ENCODE measurements at regions of chr2 and their contacts with region 1.

Region 1: DNA sequence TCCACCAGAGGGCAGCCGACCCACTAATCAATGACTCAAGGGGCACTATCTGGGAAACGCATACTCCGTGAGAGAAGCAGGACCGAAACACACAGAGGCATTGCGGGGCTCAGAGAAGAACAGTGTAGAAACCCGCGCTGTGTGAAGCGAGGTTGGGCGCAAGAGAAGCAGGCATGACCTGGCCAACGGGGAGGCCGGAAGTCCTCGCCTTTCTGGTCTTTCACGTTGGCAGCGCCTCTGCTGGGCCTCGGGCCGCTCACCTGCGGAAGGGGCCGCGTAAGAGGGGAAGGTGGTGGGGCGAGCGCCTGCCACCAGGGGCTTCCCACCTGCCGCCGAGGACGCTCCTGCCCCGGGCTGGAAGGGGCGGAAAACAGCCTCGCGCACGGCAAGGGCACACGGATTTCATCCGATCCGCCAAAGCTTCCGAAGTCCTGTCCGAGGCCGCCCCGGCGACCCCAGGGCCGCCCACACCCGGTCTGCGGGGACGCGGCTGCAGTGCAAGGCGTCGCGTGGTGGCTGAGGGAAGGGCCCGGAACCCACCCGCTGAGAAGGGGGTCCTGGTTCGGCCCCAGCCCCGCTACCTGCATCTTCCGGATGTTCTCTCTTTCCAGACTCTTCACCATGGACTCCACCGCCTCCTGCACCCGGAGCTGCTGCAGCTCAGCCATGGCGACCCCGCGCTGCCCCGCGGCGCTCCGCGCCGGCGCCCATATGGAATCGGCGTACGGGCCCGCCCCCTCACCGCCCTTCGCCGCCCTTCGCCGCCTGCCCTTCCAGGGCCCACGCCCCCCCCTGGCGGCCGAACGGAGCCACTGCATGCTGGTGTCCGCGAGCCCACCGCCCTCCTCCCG is at the start of gene FAM136A:
- DNase-seq: peak; percentile 93
- H3K4me3 Mint-ChIP-seq: peak within 1 kb of the TSS; percentile 86
- H3K27ac Mint-ChIP-seq: peak within 1 kb of the TSS; percentile 92
- H3K4me1 Mint-ChIP-seq: peaks cover 27% of the 10 kb centered on the region
- H3K27me3 Mint-ChIP-seq: no peaks in the 10 kb centered on the region
- total RNA-seq, gene FAM136A: 48.0 to 49.8 TPM

Region 2: GRCh38 chr2:70062268-70062667 is 239.3 kb before region 1 on chr2:
- CTCF ChIA-PET with region 1: no interaction called
- POLR2A ChIA-PET with region 1: no interaction called
- intact Hi-C with region 1: no loop called
- DNase-seq: no peak
- H3K4me3 Mint-ChIP-seq: no peak overlapping the region
- H3K27ac Mint-ChIP-seq: no peak overlapping the region
- H3K4me1 Mint-ChIP-seq: peaks cover 10% of the 10 kb centered on the region
- H3K27me3 Mint-ChIP-seq: no peaks in the 10 kb centered on the region

Region 3: DNA sequence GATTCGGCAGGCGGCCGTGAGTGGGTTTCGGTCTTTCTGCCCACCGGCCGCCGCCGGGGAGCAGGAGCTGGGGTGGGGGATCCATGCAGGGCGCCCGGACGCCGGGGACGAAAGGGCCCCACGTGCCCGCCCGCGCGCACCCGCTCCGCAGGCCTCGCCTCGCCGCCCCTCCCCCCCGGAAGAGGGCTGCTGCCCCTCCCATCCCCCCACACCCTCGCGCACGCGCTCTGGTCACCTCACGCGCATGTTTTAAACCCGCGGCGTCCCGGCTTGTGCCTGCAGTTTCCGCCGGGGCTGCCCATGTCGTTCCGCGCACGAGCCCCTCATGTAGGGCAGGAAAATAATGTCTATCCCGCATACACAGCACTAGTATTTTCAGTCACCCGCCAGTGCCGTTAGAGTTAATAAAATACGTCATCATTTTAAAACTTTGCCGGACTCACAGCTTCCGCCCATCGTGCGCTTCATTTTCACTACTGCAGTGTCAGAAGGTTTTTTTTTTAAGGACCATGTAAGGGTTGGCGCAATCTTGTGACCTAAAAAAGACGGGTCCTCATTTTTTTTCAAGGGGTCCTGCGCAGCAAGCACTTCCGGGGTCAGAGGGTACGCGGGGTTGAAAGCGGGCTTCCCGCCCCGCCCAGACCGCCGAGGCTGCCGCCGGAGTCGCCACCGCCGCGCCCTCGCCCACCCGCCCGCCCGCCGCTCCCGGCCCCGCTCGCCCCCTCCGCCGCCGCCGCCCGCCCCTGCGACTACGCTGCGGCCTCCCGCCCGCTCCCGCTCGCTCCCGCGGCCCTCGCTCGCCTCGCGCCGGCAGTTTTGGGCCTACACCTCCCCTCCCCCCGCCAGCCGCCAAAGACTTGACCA is 214.5 kb before region 1 on chr2 and contains the start of gene PCBP1:
- CTCF ChIA-PET with region 1: no interaction called
- POLR2A ChIA-PET with region 1: no interaction called
- intact Hi-C with region 1: loop called (anchors 10 kb)
- DNase-seq: peak; percentile 96
- H3K4me3 Mint-ChIP-seq: peak within 1 kb of the TSS; percentile 97
- H3K27ac Mint-ChIP-seq: peak within 1 kb of the TSS; percentile 100
- H3K4me1 Mint-ChIP-seq: peaks cover 49% of the 10 kb centered on the region
- H3K27me3 Mint-ChIP-seq: peaks cover 3% of the 10 kb centered on the region
- total RNA-seq, gene PCBP1: 444 to 449 TPM

Region 4: GRCh38 chr2:70616168-70616694 is 314.7 kb after region 1 on chr2:
- CTCF ChIA-PET with region 1: interaction called, 139 read pairs
- POLR2A ChIA-PET with region 1: no interaction called
- intact Hi-C with region 1: loop called (anchors 1 kb)
- DNase-seq: no peak
- H3K4me3 Mint-ChIP-seq: no peak overlapping the region
- H3K27ac Mint-ChIP-seq: no peak overlapping the region
- H3K4me1 Mint-ChIP-seq: no peaks in the 10 kb centered on the region
- H3K27me3 Mint-ChIP-seq: no peaks in the 10 kb centered on the region

Region 5: DNA sequence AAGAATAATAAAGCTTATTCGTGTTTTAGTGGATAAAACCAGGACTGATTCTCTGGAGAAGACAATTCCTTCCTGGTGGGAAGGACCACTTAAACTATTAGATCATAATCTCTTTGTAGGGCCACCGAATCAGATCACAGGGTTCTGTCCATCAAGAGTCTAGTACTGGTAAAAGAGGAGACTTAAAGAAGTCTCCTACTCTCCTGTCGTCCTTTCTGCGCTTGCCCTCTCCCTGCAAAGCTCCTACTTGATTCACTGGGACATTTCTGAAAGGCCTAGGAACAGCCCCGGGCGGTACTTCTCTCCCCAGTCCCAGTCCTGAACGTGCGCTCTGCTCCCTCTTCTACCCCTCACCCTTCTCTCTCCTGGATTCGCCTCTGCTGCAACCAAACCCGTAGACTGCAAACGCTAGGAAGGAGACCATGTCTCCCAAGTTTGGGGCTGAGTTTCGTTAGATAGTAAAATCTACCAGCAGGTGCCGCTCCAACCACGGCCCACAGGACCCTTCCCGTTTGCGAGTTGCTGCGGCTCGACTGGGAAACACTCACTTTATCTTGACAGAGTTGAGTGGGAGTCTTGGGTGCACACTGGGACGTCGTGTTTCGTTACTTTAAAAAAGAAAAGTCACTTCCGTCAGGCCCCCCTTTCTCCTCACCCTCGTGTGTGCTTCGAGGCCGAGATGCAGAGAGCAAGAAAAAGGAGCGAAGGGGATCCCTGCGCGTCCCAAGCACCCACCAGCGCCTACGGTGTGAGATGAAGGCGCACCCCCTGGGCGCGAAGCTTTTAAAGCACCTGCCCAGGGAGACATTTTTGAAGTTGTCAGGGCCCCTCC is 488.0 kb after region 1 on chr2:
- CTCF ChIA-PET with region 1: interaction called, 5 read pairs
- POLR2A ChIA-PET with region 1: interaction called, 3 read pairs
- intact Hi-C with region 1: loop called (anchors 2 kb)
- DNase-seq: peak; percentile 82
- H3K4me3 Mint-ChIP-seq: peak overlapping the region; percentile 49
- H3K27ac Mint-ChIP-seq: no peak overlapping the region
- H3K4me1 Mint-ChIP-seq: peaks cover 11% of the 10 kb centered on the region
- H3K27me3 Mint-ChIP-seq: peaks cover 52% of the 10 kb centered on the region